ENCODE measurements at regions of chr21 and their contacts with region 1.

Region 1: GRCh38 chr21:16534408-16535101 is 804.8 kb downstream of the USP25 start:
- DNase-seq: peak; percentile 71 to 87
- H3K4me3 ChIP-seq: peak overlapping the region; percentile 43 to 55
- H3K27ac ChIP-seq: peak overlapping the region; percentile 63 to 78
- H3K4me1 ChIP-seq: peaks cover 0 to 27% (median 2%) of the 10 kb centered on the region in 4 donors
- H3K27me3 ChIP-seq: no peaks in the 10 kb centered on the region
- CTCF ChIP-seq: no peak

Region 2: GRCh38 chr21:16145479-16145878 is 389.1 kb before region 1 on chr21:
- intact Hi-C with region 1: no loop called
- DNase-seq: no peak
- H3K4me3 ChIP-seq: no peak overlapping the region
- H3K27ac ChIP-seq: no peak overlapping the region
- H3K4me1 ChIP-seq: no peaks in the 10 kb centered on the region
- H3K27me3 ChIP-seq: no peaks in the 10 kb centered on the region
- CTCF ChIP-seq: no peak

Region 3: DNA sequence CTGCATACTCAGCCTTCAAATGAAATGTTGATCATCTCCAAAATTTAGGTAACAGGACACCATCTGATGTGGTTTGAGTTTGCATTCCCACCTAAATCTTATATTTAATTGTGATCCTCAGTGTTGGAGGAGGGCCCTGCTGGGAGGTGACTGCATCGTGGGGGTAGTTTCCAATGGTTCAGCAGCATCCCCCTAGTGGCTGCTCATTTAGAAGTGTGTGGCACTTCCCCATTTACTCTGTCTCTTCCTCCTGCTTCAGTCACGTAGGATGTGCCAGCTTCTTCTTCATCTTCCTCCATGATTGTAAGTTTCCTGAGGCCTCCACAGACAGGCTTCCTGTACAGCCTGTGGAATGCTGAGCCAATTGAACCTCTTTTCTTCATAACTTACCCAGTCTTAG is 73.6 kb before region 1 on chr21:
- intact Hi-C with region 1: no loop called
- DNase-seq: no peak
- H3K4me3 ChIP-seq: no peak overlapping the region
- H3K27ac ChIP-seq: no peak overlapping the region
- H3K4me1 ChIP-seq: peaks cover 0 to 6% (median 2%) of the 10 kb centered on the region in 4 donors
- H3K27me3 ChIP-seq: no peaks in the 10 kb centered on the region
- CTCF ChIP-seq: no peak

Region 4: DNA sequence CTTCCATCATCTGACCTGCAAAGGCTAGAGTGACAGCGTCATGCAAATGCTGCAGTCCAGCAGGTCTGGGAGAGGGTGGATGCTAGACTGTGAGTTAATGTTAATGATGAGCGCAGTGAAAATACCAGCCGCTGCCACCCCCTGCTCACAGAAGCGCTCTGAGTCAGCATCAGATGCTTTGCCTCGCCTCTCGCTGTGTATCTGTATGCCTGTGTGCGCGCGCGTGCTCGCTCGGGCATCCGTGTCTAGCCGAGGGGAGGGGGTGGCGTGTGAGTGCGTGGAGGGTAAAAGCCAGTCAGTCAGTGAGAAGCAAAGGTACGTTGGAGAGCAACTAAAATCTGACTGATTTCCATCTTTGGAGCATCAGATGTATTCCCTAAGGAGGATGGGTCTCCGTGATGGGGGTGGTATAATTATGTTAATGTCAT is 53.9 kb after region 1 on chr21:
- intact Hi-C with region 1: loop called (anchors 2 kb)
- DNase-seq: peak; percentile 78 to 86
- H3K4me3 ChIP-seq: peak overlapping the region; percentile 56 to 59
- H3K27ac ChIP-seq: peak overlapping the region; percentile 76 to 85
- H3K4me1 ChIP-seq: peaks cover 0 to 23% (median 3%) of the 10 kb centered on the region in 4 donors
- H3K27me3 ChIP-seq: no peaks in the 10 kb centered on the region
- CTCF ChIP-seq: no peak

Region 5: DNA sequence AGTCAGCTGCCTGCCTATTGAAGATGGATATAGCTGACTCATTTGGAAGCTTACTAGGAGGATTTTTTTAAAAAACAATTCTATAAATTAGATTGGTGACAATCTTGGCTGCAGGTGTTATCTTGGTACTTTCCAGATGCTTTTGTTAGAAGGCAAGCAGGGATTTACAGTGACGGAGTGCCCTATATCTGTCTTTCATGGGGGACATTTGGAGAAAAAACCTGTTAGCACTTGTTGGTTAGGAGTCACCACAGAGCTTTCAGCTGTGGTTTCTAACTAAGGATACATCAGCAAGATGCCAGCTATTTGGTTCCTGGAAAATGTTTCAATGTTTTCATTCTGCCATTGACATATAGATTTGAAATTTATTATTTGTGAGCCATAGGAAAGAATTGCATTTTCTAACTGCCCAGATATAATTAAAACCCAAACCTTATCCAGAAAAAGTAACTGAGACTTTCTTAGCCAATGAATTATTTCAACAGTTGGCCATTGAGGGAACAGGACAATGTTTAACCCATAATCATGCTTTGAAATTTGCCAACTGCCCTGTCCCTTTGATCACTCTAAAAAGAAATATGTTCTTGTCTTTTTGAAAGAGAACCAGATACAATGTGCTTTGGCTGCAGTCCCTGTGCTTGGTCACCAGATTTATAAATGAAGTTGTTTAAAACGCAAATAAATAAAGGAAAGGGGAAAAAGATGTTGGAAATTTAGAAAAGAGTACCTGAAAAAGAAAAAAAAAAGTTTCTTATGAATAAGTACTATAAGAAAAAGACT is 217.3 kb after region 1 on chr21:
- intact Hi-C with region 1: no loop called
- DNase-seq: no peak
- H3K4me3 ChIP-seq: no peak overlapping the region
- H3K27ac ChIP-seq: no peak overlapping the region
- H3K4me1 ChIP-seq: no peaks in the 10 kb centered on the region
- H3K27me3 ChIP-seq: no peaks in the 10 kb centered on the region
- CTCF ChIP-seq: no peak

Measured in tibial artery (tissue), 4 donors.